ENCODE measurements at regions of chr18 and their contacts with region 1.

Region 1: GRCh38 chr18:3062798-3063680 is 50.1 kb upstream of the LPIN2 start:
- DNase-seq: peak; percentile 76
- ATAC-seq: peak; percentile 57
- H3K4me3 Mint-ChIP-seq: peak overlapping the region; percentile 68
- H3K27ac Mint-ChIP-seq: peak overlapping the region; percentile 87
- H3K4me1 Mint-ChIP-seq: peaks cover 57% of the 10 kb centered on the region
- H3K27me3 Mint-ChIP-seq: no peaks in the 10 kb centered on the region

Region 2: DNA sequence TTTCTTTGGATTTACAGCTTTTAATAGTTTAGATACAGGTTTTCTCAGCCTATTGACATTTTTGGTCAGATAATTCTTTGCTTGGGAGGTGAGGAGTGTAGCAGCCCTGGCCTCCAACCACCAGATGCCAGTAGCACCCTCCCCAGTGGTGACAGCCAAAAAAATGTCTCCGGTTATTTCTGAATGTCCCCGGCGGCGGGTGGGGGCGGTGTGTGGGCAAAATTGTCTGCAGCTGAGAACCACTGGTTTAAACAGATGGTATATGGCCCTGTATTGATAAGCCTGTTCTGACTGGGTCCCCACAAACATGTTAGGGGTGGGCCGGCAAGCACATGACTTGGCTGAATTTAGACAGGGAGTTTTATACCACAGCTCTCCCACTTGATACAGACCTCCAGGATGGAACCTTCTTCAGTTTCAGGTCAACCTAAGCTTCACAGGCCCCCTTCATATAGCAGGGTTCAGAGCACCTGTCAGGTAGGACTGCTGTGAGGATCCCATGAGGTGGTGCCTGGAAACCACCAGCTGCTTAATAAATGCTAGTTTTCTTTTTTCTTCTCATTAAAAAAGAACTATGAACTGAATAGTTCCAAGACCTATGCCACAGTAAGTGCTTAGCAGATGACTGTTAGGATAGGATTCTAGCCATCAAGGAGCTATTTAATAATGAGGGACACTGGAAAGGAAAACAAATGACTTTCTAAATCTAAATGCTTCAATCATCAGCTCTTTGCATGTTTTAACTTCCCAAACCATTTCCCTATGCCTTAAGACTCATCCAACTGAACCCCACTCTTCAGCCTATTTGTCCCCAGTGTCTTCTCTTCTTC is 68.2 kb before region 1 on chr18:
- POLR2A ChIA-PET with region 1: interaction called, 39 read pairs
- DNase-seq: peak; percentile 73
- ATAC-seq: peak; percentile 81
- H3K4me3 Mint-ChIP-seq: peak overlapping the region; percentile 52
- H3K27ac Mint-ChIP-seq: peak overlapping the region; percentile 75
- H3K4me1 Mint-ChIP-seq: peaks cover 57% of the 10 kb centered on the region
- H3K27me3 Mint-ChIP-seq: no peaks in the 10 kb centered on the region

Region 3: GRCh38 chr18:3012964-3013804 is 49.9 kb before region 1 on chr18 and contains the start of gene LPIN2:
- POLR2A ChIA-PET with region 1: interaction called, 15 read pairs
- DNase-seq: peak; percentile 97
- ATAC-seq: peak; percentile 93
- H3K4me3 Mint-ChIP-seq: peak within 1 kb of the TSS; percentile 97
- H3K27ac Mint-ChIP-seq: peak within 1 kb of the TSS; percentile 91
- H3K4me1 Mint-ChIP-seq: peaks cover 56% of the 10 kb centered on the region
- H3K27me3 Mint-ChIP-seq: no peaks in the 10 kb centered on the region
- total RNA-seq, gene LPIN2: 91.0 to 93.9 TPM

Region 4: DNA sequence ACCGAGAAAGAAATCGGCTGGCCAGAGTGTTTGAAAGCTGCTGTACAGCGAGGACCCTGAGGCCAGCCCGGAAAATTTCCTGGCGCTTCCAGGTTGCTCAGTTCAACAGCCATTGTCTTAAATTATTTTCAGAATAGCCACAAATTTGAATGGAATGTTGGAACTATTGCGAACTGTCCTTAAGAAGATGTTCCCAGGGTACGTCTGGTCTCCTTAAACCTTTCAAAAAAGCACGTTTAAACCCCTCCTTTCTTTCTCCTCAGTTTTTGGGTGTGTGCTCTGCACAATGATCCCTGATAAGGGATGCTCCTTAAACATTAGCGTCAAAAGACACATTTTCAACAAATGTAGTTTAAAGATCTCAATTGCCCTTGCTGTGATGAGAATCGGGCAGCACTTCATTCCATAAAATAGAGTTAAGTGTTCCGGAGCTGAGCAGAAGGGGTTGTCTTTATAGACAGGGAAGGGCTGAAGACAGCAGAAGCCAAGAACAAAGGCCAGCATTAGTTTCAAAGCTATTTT is 35.6 kb before region 1 on chr18:
- POLR2A ChIA-PET with region 1: no interaction called
- DNase-seq: no peak
- ATAC-seq: no peak
- H3K4me3 Mint-ChIP-seq: no peak overlapping the region
- H3K27ac Mint-ChIP-seq: no peak overlapping the region
- H3K4me1 Mint-ChIP-seq: no peaks in the 10 kb centered on the region
- H3K27me3 Mint-ChIP-seq: no peaks in the 10 kb centered on the region

Region 5: GRCh38 chr18:3074087-3074486 is 11.0 kb after region 1 on chr18:
- POLR2A ChIA-PET with region 1: interaction called, 10 read pairs
- DNase-seq: no peak
- ATAC-seq: no peak
- H3K4me3 Mint-ChIP-seq: no peak overlapping the region
- H3K27ac Mint-ChIP-seq: peak overlapping the region; percentile 22
- H3K4me1 Mint-ChIP-seq: peaks cover 19% of the 10 kb centered on the region
- H3K27me3 Mint-ChIP-seq: no peaks in the 10 kb centered on the region

Measured in activated naive CD8-positive, alpha-beta T cell treated with anti-CD3 and anti-CD28 coated beads, Interleukin-2, amount 10 ng/mL, durations not matched to agents 7 days and 5 days (primary cell).